ENCODE measurements at regions of chr17 and their contacts with region 1.

Region 1: GRCh38 chr17:35088881-35089585 is 25.5 kb upstream of the RFFL start:
- DNase-seq: peak; percentile 95
- ATAC-seq: peak; percentile 77
- H3K4me3 Mint-ChIP-seq: peak overlapping the region; percentile 89
- H3K27ac Mint-ChIP-seq: peak overlapping the region; percentile 97
- H3K4me1 Mint-ChIP-seq: peaks cover 54% of the 10 kb centered on the region
- H3K27me3 Mint-ChIP-seq: no peaks in the 10 kb centered on the region

Region 2: GRCh38 chr17:34961093-34961911 is 127.7 kb before region 1 on chr17 and contains the starts of genes CCT6B and ZNF830:
- CTCF ChIA-PET with region 1: interaction called, 7 read pairs
- POLR2A ChIA-PET with region 1: interaction called, 5 read pairs
- intact Hi-C with region 1: loop called (anchors 1 to 2 kb)
- DNase-seq: peak; percentile 95
- ATAC-seq: peak; percentile 91
- H3K4me3 Mint-ChIP-seq: peak within 1 kb of the TSS; percentile 99
- H3K27ac Mint-ChIP-seq: peak within 1 kb of the TSS; percentile 100
- H3K4me1 Mint-ChIP-seq: peaks cover 26% of the 10 kb centered on the region
- H3K27me3 Mint-ChIP-seq: no peaks in the 10 kb centered on the region
- total RNA-seq, gene CCT6B: 0.95 to 1.6 TPM
- total RNA-seq, gene ZNF830: 20.0 TPM

Region 3: GRCh38 chr17:34998205-34998604 is 90.8 kb before region 1 on chr17:
- CTCF ChIA-PET with region 1: interaction called, 34 read pairs
- POLR2A ChIA-PET with region 1: no interaction called
- intact Hi-C with region 1: loop called (anchors 1 kb)
- DNase-seq: peak; percentile 89
- ATAC-seq: peak; percentile 100
- H3K4me3 Mint-ChIP-seq: no peak overlapping the region
- H3K27ac Mint-ChIP-seq: peak overlapping the region; percentile 51
- H3K4me1 Mint-ChIP-seq: peaks cover 6% of the 10 kb centered on the region
- H3K27me3 Mint-ChIP-seq: no peaks in the 10 kb centered on the region

Region 4: GRCh38 chr17:35022536-35023063 is 66.4 kb before region 1 on chr17:
- CTCF ChIA-PET with region 1: interaction called, 25 read pairs
- POLR2A ChIA-PET with region 1: interaction called, 4 read pairs
- intact Hi-C with region 1: loop called (anchors 1 to 2 kb)
- DNase-seq: peak; percentile 89
- ATAC-seq: peak; percentile 100
- H3K4me3 Mint-ChIP-seq: peak overlapping the region; percentile 67
- H3K27ac Mint-ChIP-seq: peak overlapping the region; percentile 99
- H3K4me1 Mint-ChIP-seq: peaks cover 44% of the 10 kb centered on the region
- H3K27me3 Mint-ChIP-seq: no peaks in the 10 kb centered on the region

Region 5: GRCh38 chr17:35063514-35064223 is 25.4 kb before region 1 on chr17 and contains the start of gene RFFL:
- CTCF ChIA-PET with region 1: interaction called, 21 read pairs
- POLR2A ChIA-PET with region 1: interaction called, 3 read pairs
- intact Hi-C with region 1: loop called (anchors 1 kb)
- DNase-seq: peak; percentile 94
- ATAC-seq: peak; percentile 98
- H3K4me3 Mint-ChIP-seq: peak within 1 kb of the TSS; percentile 12
- H3K27ac Mint-ChIP-seq: peak within 1 kb of the TSS; percentile 80
- H3K4me1 Mint-ChIP-seq: peaks cover 62% of the 10 kb centered on the region
- H3K27me3 Mint-ChIP-seq: no peaks in the 10 kb centered on the region
- total RNA-seq, gene RFFL: 19.2 to 22.9 TPM

Region 6: GRCh38 chr17:35141681-35142466 is 52.8 kb after region 1 on chr17 and contains the start of gene NLE1:
- CTCF ChIA-PET with region 1: interaction called, 4 read pairs
- POLR2A ChIA-PET with region 1: no interaction called
- intact Hi-C with region 1: loop called in 1 of 2 experiments (anchors 1 kb)
- DNase-seq: peak; percentile 94
- ATAC-seq: peak; percentile 93
- H3K4me3 Mint-ChIP-seq: peak within 1 kb of the TSS; percentile 80
- H3K27ac Mint-ChIP-seq: peak within 1 kb of the TSS; percentile 81
- H3K4me1 Mint-ChIP-seq: peaks cover 14% of the 10 kb centered on the region
- H3K27me3 Mint-ChIP-seq: no peaks in the 10 kb centered on the region
- total RNA-seq, gene NLE1: 38.1 to 40.6 TPM

Region 7: GRCh38 chr17:35587074-35587971 is 498.3 kb after region 1 on chr17 and contains the start of gene AP2B1:
- CTCF ChIA-PET with region 1: no interaction called
- POLR2A ChIA-PET with region 1: no interaction called
- intact Hi-C with region 1: loop called in 1 of 2 experiments (anchors 1 kb)
- DNase-seq: peak; percentile 96
- ATAC-seq: peak; percentile 94
- H3K4me3 Mint-ChIP-seq: peak within 1 kb of the TSS; percentile 98
- H3K27ac Mint-ChIP-seq: peak within 1 kb of the TSS; percentile 98
- H3K4me1 Mint-ChIP-seq: peaks cover 25% of the 10 kb centered on the region
- H3K27me3 Mint-ChIP-seq: no peaks in the 10 kb centered on the region
- total RNA-seq, gene AP2B1: 166 to 184 TPM